ENCODE measurements at regions of chr6 and their contacts with region 1.

Region 1: DNA sequence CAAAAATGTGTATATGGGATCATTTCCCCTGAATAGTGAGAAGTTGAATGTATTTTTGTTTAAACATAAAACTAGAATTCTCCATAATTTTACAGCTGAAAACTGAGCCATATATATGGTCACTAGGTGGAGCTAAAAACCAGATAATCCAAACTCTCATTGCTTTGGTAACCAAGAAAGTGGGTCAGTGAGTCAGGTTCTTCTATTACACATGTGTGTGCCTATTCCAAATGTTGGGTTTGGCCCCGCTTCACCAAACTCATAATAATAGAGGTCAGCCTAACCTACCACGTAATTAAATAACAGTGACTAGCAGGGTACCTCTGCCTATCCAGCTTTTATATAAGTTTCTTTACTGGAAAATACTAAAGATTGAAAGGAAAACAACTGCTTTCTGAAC is 19.3 kb upstream of the RNGTT start:
- DNase-seq: peak in 1 of 2 donors; percentile 65
- ATAC-seq: peak; percentile 94
- H3K4me3 ChIP-seq: no peak overlapping the region
- H3K27ac ChIP-seq: no peak overlapping the region
- H3K4me1 ChIP-seq: no peaks in the 10 kb centered on the region
- H3K27me3 ChIP-seq: no peaks in the 10 kb centered on the region

Region 2: DNA sequence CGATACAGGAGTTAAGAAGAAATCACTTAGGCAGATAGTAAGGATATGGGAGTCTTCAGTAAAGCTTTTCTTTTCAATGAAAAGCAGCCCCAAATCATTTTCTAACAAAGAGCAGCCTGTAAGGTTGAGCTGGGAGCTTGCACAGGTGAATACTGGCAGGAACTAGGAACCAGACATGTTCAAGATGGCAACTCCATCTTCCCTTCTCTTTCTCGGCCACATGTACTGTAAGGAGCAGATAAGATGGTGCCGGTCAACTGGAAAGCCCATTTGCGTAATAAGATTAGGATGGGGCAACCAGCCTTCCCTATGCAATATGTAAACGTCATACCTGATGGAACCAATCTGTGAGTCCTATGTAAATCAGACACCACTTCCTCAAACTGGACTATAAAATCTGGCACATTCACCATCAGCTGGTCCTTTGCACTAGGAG is 26.9 kb after region 1 on chr6:
- intact Hi-C with region 1: no loop called
- DNase-seq: no peak
- ATAC-seq: no peak
- H3K4me3 ChIP-seq: no peak overlapping the region
- H3K27ac ChIP-seq: no peak overlapping the region
- H3K4me1 ChIP-seq: no peaks in the 10 kb centered on the region
- H3K27me3 ChIP-seq: no peaks in the 10 kb centered on the region

Region 3: GRCh38 chr6:89035252-89036106 is 52.8 kb after region 1 on chr6:
- intact Hi-C with region 1: loop called (anchors 5 to 10 kb)
- DNase-seq: peak; percentile 89 to 90
- ATAC-seq: peak; percentile 94
- H3K4me3 ChIP-seq: no peak overlapping the region
- H3K27ac ChIP-seq: peak overlapping the region in 1 of 2 donors; percentile 82
- H3K4me1 ChIP-seq: peaks cover 0 to 6% of the 10 kb centered on the region in 2 donors
- H3K27me3 ChIP-seq: no peaks in the 10 kb centered on the region

Region 4: GRCh38 chr6:89050155-89050554 is 67.4 kb after region 1 on chr6:
- intact Hi-C with region 1: no loop called
- DNase-seq: peak in 1 of 2 donors; percentile 56
- ATAC-seq: peak; percentile 81
- H3K4me3 ChIP-seq: no peak overlapping the region
- H3K27ac ChIP-seq: no peak overlapping the region
- H3K4me1 ChIP-seq: peaks cover 0 to 3% of the 10 kb centered on the region in 2 donors
- H3K27me3 ChIP-seq: no peaks in the 10 kb centered on the region

Region 5: GRCh38 chr6:89122625-89123024 is 139.9 kb after region 1 on chr6:
- intact Hi-C with region 1: loop called in 1 of 2 experiments (anchors 5 kb)
- DNase-seq: no peak
- ATAC-seq: no peak
- H3K4me3 ChIP-seq: no peak overlapping the region
- H3K27ac ChIP-seq: no peak overlapping the region
- H3K4me1 ChIP-seq: no peaks in the 10 kb centered on the region
- H3K27me3 ChIP-seq: no peaks in the 10 kb centered on the region

Region 6: GRCh38 chr6:89242574-89243330 is 260.0 kb after region 1 on chr6:
- intact Hi-C with region 1: loop called (anchors 2 to 5 kb)
- DNase-seq: no peak
- ATAC-seq: no peak
- H3K4me3 ChIP-seq: no peak overlapping the region
- H3K27ac ChIP-seq: no peak overlapping the region
- H3K4me1 ChIP-seq: no peaks in the 10 kb centered on the region
- H3K27me3 ChIP-seq: no peaks in the 10 kb centered on the region

Region 7: GRCh38 chr6:89352278-89353117 is 369.8 kb after region 1 on chr6 and contains the start of gene UBE2J1:
- intact Hi-C with region 1: loop called in 1 of 2 experiments (anchors 5 kb)
- DNase-seq: peak; percentile 98 to 99
- ATAC-seq: peak; percentile 98
- H3K4me3 ChIP-seq: peak within 1 kb of the TSS; percentile 64 to 99
- H3K27ac ChIP-seq: peak within 1 kb of the TSS; percentile 88 to 100
- H3K4me1 ChIP-seq: peaks cover 0 to 1% of the 10 kb centered on the region in 2 donors
- H3K27me3 ChIP-seq: no peaks in the 10 kb centered on the region
- total RNA-seq, gene UBE2J1: 34.1 to 38.7 TPM

Region 8: DNA sequence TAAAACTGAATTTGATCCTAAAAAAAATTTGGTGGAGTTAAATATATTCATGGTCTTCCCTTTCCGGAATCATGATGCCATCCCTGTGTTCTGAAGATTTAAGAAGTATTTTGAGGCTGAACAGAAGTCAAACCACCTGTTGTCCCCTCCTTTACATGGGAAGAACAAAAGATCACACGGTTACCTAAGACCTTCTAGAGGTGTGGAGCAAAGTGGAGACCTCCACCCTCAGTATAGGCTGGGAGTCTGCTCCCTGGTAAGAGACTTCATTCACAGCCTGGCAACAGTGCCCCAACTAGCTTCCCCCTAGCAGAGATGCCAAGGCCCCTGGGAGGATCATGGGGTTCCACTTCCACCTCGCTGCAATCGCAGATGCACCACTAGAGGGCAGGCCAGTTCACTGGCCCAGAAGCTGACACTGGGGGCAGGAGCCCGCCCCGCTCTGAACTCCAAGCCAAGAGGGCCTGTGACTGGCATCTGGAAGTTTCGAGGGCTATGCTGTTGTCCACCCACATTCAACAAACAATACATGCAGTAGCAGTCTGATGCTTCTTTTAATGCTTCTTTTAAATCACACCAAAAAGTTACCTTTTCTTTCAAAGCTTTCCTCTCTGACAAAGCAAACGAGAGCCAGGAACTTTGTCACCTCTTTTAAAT is 389.3 kb after region 1 on chr6:
- intact Hi-C with region 1: loop called in 1 of 2 experiments (anchors 5 kb)
- DNase-seq: peak; percentile 85 to 93
- ATAC-seq: peak; percentile 90
- H3K4me3 ChIP-seq: no peak overlapping the region
- H3K27ac ChIP-seq: no peak overlapping the region
- H3K4me1 ChIP-seq: no peaks in the 10 kb centered on the region
- H3K27me3 ChIP-seq: no peaks in the 10 kb centered on the region